Colonic mucosa (tissue), 4 donors: ENCODE measurements at regions of chr3 and their contacts with region 1.

Region 1: DNA sequence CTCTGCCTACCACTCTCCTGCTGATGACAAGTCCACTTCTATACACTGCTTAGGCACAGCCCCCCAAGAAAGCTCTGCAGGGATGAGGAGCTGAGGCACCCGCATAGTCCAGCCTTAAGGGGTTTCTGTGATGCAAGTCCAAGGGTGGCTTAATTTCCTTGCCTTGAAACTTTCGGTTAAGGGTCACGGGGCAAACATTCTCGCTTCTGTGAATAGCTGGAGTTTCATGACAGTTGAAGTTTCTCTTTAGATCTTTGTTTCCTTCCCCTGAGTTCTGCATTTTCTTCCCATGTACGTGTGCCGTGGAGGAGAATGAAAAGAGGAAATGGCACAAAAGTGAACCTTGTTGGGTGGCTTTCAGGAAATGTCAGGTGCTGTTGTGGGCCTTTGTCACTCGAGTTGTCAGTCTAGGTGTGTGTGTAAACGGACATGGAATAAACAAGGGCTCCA is 7.0 kb downstream of the GPR160 start:
- DNase-seq: peak; percentile 54
- H3K4me3 ChIP-seq: no peak overlapping the region
- H3K27ac ChIP-seq: peak overlapping the region; percentile 89
- H3K4me1 ChIP-seq: peaks cover 14% of the 10 kb centered on the region
- H3K27me3 ChIP-seq: no peaks in the 10 kb centered on the region
- CTCF ChIP-seq: no peak

Region 2: GRCh38 chr3:170078620-170079281 is 33.9 kb after region 1 on chr3:
- intact Hi-C with region 1: loop called (anchors 5 kb)
- DNase-seq: no peak
- H3K4me3 ChIP-seq: no peak overlapping the region
- H3K27ac ChIP-seq: no peak overlapping the region
- H3K4me1 ChIP-seq: no peaks in the 10 kb centered on the region
- H3K27me3 ChIP-seq: no peaks in the 10 kb centered on the region
- CTCF ChIP-seq: peak; percentile 5